ENCODE measurements at regions of chr6 and their contacts with region 1.

Region 1: DNA sequence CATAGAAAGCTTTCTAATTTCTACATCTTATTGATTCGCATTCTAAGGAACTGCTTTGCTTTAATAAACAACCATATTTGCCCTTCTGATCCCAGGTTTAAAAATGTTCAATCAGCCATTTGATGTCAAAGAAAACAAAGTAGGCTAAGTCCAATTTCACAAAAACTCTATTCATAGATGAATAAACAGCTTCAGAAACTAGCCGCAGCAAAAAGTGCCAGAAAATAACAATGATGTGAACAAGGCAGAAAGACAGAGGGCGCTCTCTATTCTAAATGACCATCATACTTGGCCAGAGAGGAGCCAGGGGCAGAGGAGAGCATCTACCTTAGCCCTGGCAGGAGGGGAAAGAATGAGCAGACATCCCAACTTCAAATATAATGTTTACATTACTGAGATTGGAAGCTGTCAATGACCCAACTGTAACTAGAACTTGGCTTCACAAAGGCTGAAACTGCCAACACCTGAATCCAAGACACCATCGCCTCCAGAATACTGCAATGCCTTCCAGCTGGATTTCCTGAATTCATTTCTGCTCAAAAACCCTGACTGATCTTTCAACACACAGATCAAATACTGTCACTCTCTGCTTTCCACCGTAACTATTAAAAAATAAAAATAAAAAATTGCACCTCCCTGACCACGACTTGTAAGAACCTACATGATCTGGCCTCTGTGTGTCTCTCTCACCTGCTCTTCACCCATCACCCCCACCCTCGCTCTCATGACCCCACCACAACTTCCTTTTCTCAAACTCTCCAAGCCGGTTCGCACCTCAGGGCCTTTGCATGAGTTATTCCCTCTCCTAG is 9.5 kb downstream of the CNKSR3 start:
- DNase-seq: no peak
- H3K4me3 ChIP-seq: no peak overlapping the region
- H3K27ac ChIP-seq: no peak overlapping the region
- H3K4me1 ChIP-seq: no peaks in the 10 kb centered on the region
- H3K27me3 ChIP-seq: no peaks in the 10 kb centered on the region
- CTCF ChIP-seq: peak; percentile 25

Region 2: DNA sequence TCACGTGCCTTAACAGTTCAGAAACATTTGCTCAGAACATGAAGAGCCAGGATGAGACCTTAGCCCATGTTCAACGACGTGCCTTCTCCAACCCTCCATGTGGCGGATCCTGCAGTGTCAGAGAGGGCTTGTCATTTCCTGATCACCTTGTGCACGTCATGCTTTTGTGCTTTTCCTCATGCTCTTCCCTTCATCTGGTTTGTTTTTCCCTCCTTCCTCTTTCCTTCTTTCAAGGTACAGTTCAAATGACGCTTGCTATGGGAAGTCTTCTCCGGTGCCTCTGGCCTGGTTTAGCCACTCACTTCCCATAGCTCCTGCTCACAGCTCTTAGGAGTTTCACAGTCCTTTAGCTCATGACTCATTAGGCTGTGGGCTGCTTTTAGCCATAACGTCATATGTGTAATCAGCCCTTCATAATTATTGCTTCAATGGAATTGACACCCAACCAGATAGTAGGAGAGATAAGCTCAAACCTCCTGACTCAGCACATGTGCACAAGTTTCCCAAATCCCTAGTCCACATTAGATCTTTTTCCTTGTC is 112.2 kb after region 1 on chr6:
- intact Hi-C with region 1: loop called (anchors 5 kb)
- DNase-seq: no peak
- H3K4me3 ChIP-seq: no peak overlapping the region
- H3K27ac ChIP-seq: no peak overlapping the region
- H3K4me1 ChIP-seq: no peaks in the 10 kb centered on the region
- H3K27me3 ChIP-seq: no peaks in the 10 kb centered on the region
- CTCF ChIP-seq: no peak

Measured in colonic mucosa (tissue), 4 donors.